A549 (cell line): ENCODE measurements at regions of chr6 and their contacts with region 1.

Region 1: GRCh38 chr6:27809939-27810767 is 102.0 kb downstream of the OR2B2 start:
- DNase-seq: peak; percentile 80 to 95
- ATAC-seq: peak; percentile 58 to 59
- H3K4me3 ChIP-seq: peak overlapping the region; percentile 53
- H3K27ac ChIP-seq: peak overlapping the region; percentile 83 to 99
- H3K4me1 ChIP-seq: peaks cover 28% of the 10 kb centered on the region; the same call in 2 of the 3 replicates
- CTCF ChIP-seq: no peak
- EP300 ChIP-seq: no peak
- POLR2A ChIP-seq: peak; percentile 97
- RAD21 ChIP-seq: no peak

Region 2: DNA sequence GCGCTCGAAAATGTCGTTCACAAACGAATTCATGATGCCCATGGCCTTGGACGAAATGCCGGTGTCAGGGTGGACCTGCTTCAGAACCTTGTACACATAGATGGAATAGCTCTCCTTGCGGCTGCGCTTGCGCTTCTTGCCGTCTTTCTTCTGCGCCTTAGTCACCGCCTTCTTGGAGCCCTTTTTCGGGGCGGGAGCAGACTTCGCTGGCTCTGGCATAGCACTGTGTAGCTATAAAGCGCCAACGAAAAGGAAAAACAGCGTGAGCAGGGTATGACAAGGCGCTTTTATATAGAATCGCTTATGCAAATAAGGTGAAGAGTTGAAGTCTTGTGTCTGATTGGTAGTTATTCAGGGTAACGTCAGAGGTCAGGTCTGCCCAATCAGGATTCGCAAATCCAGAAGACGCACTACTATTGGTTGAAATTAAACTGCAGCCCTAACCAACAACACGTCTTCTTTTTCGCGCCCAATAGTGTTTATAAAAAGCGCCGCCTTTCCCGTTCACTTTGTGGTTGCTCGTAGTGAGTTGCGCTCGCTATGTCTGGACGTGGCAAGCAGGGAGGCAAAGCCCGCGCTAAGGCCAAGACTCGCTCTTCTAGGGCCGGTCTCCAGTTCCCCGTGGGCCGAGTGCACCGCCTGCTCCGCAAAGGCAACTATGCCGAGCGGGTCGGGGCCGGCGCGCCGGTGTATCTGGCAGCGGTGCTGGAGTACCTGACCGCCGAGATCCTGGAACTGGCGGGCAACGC is 677.4 kb before region 1 on chr6:
- CTCF ChIA-PET with region 1: no interaction called
- POLR2A ChIA-PET with region 1: interaction called, 38 read pairs
- DNase-seq: peak; percentile 93 to 99
- ATAC-seq: peak; percentile 81 to 83
- H3K4me3 ChIP-seq: peak overlapping the region; percentile 75
- H3K27ac ChIP-seq: peak overlapping the region; percentile 85 to 96
- H3K4me1 ChIP-seq: peaks cover 46% of the 10 kb centered on the region
- CTCF ChIP-seq: no peak
- EP300 ChIP-seq: 0 out of 5 replicates have a peak, but pooled peaks of 1 of the 2 experiments have one; percentile 11
- POLR2A ChIP-seq: peak; percentile 96
- RAD21 ChIP-seq: no peak

Region 3: DNA sequence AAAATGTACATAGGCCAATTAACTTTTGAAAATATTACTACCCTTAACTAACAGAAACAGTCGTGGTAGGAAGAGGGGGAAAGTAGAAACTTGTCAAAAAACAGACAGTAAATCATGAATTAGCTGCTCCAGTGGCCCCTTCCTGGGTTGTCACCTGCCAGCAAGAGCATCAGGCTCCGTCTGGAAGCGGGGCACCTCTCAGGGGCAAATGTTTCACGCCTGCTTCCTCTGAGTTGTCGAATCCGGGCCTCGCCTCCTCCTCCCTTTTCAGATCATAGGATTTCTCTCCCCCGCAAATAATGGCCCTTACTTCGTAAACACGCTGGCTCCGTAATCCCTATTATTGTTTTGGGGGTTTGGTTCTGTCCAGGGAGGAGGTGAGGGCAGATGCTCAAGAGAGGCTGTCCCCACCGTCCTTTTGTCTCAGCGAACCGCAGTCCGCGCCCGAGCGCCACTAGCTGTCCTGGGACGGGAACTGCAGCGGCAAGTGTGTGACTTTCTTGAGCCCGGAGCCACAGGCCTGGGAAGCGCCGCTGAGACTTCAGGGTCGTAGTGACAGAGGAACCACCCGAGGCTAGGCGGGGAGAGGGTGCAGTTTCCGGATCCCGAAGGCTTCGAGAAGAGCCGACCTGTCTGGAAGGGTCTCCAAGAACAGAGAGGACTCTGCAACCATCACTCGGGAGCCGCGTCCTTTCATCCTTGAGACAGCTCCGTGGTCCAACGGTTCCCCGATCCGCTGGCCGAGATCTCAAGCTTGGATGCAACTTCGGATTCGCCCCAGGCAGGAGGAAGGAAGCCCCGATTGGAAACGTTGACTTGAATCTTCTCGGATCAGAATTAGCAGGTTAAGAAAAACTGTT is 122.8 kb before region 1 on chr6:
- CTCF ChIA-PET with region 1: no interaction called
- POLR2A ChIA-PET with region 1: no interaction called
- DNase-seq: peak in 1 of 2 experiments; percentile 89
- ATAC-seq: peak; percentile 80 to 84
- H3K4me3 ChIP-seq: peak overlapping the region; percentile 79
- H3K27ac ChIP-seq: peak overlapping the region; percentile 61 to 81
- H3K4me1 ChIP-seq: peaks cover 8% of the 10 kb centered on the region; the same call in 2 of the 3 replicates
- CTCF ChIP-seq: peak; percentile 46
- EP300 ChIP-seq: no peak
- POLR2A ChIP-seq: no peak
- RAD21 ChIP-seq: peak; percentile 45 to 50

Region 4: GRCh38 chr6:27743818-27744217 is 66.3 kb before region 1 on chr6:
- CTCF ChIA-PET with region 1: no interaction called
- POLR2A ChIA-PET with region 1: no interaction called
- DNase-seq: no peak
- ATAC-seq: no peak
- H3K4me3 ChIP-seq: no peak overlapping the region
- H3K27ac ChIP-seq: no peak overlapping the region
- H3K4me1 ChIP-seq: no peaks in the 10 kb centered on the region
- CTCF ChIP-seq: no peak
- EP300 ChIP-seq: no peak
- POLR2A ChIP-seq: no peak
- RAD21 ChIP-seq: no peak

Region 5: DNA sequence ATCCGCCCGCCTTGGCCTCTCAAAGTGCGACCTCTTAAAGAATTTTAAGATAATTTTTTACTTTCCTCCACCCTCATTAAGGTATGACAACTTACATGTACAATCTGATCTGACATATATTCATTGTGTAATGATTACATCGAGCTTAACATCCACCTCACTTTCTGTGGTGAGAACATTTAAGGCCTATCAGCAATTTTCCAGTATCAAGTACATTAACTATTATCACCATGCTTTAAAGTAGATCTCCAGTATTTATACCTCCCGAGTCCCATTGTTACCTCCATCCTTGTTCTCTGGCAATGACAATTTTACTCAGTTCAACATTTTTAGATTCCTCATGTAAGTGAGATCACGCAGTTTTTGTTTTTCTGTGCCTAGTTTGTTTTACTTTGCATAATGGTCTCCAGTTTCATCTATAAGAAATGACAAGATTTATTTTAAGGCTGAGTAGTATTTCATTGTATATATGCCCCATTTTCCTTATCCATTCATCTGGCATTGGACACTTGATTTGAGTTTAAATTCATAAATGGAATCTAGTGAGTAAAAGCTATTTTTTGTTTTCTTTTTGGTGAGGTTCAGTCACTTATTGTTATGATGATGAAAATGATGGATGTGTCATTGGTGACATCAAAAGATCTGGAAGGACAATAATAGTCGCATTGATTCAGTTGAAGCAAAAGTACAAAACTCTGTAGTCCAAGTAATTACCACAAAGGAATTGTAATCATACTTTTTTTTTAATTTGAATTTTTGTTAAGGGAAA is 15.1 kb after region 1 on chr6:
- CTCF ChIA-PET with region 1: no interaction called
- POLR2A ChIA-PET with region 1: interaction called, 28 read pairs
- DNase-seq: no peak
- ATAC-seq: peak in 1 of 2 experiments; percentile 10; a peak in 2 of 6 replicates
- H3K4me3 ChIP-seq: peak overlapping the region; percentile 45
- H3K27ac ChIP-seq: peak overlapping the region; percentile 66 to 85
- H3K4me1 ChIP-seq: no peaks in the 10 kb centered on the region
- CTCF ChIP-seq: no peak
- EP300 ChIP-seq: no peak
- POLR2A ChIP-seq: no peak
- RAD21 ChIP-seq: no peak

Region 6: DNA sequence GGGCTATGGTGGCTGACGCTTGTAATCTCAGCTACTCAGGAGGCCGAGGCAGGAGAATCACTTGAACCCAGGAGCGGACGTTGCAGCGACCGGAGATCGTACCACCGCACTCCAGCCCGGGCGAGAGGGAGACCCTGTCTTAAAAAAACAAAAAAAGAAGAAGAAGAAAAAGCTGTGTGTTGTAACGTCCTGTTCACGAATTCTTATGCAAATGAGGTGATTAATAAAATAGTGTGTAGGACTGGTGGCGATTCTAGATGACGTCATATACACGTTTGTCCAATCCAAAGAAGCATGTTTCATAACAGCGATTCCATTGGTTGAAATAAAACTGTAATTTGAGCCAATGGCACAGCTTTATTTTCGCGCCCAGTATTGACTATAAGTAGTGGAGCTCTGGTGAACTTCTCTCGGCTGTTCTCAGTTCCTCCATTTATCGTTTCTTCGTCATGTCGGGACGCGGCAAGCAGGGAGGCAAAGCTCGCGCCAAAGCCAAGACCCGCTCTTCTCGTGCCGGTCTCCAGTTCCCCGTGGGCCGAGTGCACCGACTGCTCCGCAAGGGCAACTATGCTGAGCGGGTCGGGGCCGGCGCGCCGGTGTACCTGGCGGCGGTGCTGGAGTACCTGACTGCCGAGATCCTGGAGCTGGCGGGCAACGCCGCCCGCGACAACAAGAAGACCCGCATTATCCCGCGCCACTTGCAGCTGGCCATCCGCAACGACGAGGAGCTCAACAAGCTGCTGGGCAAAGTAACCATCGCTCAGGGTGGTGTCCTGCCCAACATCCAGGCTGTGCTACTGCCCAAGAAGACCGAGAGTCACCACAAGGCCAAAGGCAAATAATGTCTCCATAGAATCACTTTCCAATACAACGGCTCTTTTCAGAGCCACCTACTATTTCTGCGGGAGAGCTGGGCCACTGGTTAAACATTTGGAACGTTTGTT is 55.0 kb after region 1 on chr6:
- CTCF ChIA-PET with region 1: no interaction called
- POLR2A ChIA-PET with region 1: interaction called, 12 read pairs
- DNase-seq: peak; percentile 78 to 87
- ATAC-seq: peak; percentile 72 to 80
- H3K4me3 ChIP-seq: peak overlapping the region; percentile 52
- H3K27ac ChIP-seq: peak overlapping the region; percentile 74 to 81
- H3K4me1 ChIP-seq: 0 out of 3 replicates have a peak, but pooled peaks cover 4% of the 10 kb centered on the region
- CTCF ChIP-seq: no peak
- EP300 ChIP-seq: no peak
- POLR2A ChIP-seq: peak; percentile 32; the same call in 1 of the 2 replicates
- RAD21 ChIP-seq: no peak